ENCODE measurements at regions of chr6 and their contacts with region 1.

Region 1: DNA sequence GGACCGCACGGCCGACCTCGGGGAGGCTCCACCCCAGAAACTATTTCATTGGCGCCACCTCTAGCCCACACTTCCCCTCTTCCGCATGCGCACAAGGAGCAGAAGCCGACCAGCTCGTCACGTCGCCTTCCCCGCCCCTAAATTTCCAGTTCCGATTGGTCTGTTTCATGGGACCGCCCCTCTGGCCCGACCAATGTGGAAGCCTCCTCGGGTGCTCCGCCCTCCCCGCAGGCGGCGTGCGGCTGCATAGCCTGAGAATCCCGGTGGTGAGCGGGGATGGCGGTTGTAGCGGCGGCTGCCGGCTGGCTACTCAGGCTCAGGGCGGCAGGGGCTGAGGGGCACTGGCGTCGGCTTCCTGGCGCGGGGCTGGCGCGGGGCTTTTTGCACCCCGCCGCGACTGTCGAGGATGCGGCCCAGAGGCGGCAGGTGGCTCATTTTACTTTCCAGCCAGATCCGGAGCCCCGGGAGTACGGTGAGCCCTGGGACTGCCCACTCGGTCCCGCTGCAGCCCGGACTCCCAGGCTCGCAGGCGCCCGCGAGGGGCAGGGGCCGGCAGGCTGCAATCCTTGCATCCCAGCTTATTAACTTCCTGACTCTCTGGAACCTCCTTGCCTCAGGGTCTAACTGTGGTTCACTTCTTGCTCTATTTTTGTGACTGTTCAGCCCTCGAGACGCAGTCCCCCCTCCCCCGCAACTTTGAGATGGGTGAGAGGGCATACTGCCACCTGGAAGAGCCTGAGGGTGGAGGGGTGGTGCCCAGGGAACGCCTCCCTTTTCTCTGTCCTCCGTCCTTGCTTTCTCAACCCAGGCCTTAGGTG is at the start of gene BCKDHB:
- DNase-seq: peak; percentile 91 to 99 (median 98)
- ATAC-seq: peak; percentile 99
- H3K4me3 ChIP-seq: peak within 1 kb of the TSS; percentile 77
- H3K4me3 Mint-ChIP-seq: peak within 1 kb of the TSS; percentile 86 to 98 (median 94)
- H3K27ac ChIP-seq: peak within 1 kb of the TSS; percentile 75
- H3K27ac Mint-ChIP-seq: peak within 1 kb of the TSS; percentile 78 to 94 (median 91)
- H3K4me1 ChIP-seq: peaks cover 0 to 6% of the 10 kb centered on the region in 2 donors
- H3K4me1 Mint-ChIP-seq: peaks cover 17 to 34% (median 24%) of the 10 kb centered on the region in 7 donors
- H3K27me3 ChIP-seq: no peaks in the 10 kb centered on the region
- H3K27me3 Mint-ChIP-seq: peaks cover 5 to 16% (median 11%) of the 10 kb centered on the region in 5 donors
- total RNA-seq, gene BCKDHB: 13.8 to 22.1 (median 17.4) TPM

Region 2: GRCh38 chr6:79078075-79079025 is 1028.3 kb before region 1 on chr6 and contains the start of gene PHIP:
- CTCF ChIA-PET with region 1: no interaction called
- POLR2A ChIA-PET with region 1: interaction called, 10 read pairs
- intact Hi-C with region 1: loop called (anchors 1 to 5 kb)
- DNase-seq: peak; percentile 89 to 97 (median 94)
- ATAC-seq: peak; percentile 90
- H3K4me3 ChIP-seq: peak within 1 kb of the TSS; percentile 83
- H3K4me3 Mint-ChIP-seq: peak within 1 kb of the TSS; percentile 92 to 98 (median 94)
- H3K27ac ChIP-seq: peak within 1 kb of the TSS; percentile 98
- H3K27ac Mint-ChIP-seq: peak within 1 kb of the TSS; percentile 93 to 98 (median 95)
- H3K4me1 ChIP-seq: peaks cover 19 to 21% of the 10 kb centered on the region in 2 donors
- H3K4me1 Mint-ChIP-seq: peaks cover 19 to 46% (median 41%) of the 10 kb centered on the region in 7 donors
- H3K27me3 ChIP-seq: no peaks in the 10 kb centered on the region
- H3K27me3 Mint-ChIP-seq: peaks cover 4 to 23% (median 15%) of the 10 kb centered on the region in 5 donors
- total RNA-seq, gene PHIP: 34.0 to 46.8 (median 41.6) TPM

Region 3: DNA sequence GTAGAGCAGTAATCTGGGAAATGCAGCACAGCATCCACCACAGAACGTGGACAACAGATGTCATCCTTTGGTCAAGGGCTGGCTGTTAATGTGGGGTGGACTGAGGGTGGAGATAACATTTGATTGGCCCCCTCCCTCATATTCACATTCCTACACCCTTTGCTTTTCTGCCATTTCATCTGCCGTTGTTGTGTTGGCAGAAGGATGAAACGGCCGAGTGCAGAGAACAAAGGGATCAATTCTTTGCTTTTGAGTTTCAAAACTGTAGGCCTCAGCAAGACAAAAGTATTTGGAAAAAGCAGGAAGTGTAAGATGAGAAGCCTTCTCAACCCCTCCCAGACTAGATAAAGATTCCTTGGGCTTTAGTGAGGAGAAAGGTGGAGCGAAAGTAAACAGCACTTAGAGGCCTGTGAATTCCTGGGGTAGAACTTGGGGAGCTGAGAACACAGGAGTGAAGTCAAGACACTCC is 954.3 kb before region 1 on chr6:
- CTCF ChIA-PET with region 1: no interaction called
- POLR2A ChIA-PET with region 1: no interaction called
- intact Hi-C with region 1: no loop called
- DNase-seq: no peak
- ATAC-seq: no peak
- H3K4me3 ChIP-seq: no peak overlapping the region
- H3K4me3 Mint-ChIP-seq: no peak overlapping the region
- H3K27ac ChIP-seq: no peak overlapping the region
- H3K27ac Mint-ChIP-seq: no peak overlapping the region
- H3K4me1 ChIP-seq: no peaks in the 10 kb centered on the region
- H3K4me1 Mint-ChIP-seq: no peaks in the 10 kb centered on the region
- H3K27me3 ChIP-seq: no peaks in the 10 kb centered on the region
- H3K27me3 Mint-ChIP-seq: peaks cover 0 to 8% (median 2%) of the 10 kb centered on the region in 5 donors

Region 4: DNA sequence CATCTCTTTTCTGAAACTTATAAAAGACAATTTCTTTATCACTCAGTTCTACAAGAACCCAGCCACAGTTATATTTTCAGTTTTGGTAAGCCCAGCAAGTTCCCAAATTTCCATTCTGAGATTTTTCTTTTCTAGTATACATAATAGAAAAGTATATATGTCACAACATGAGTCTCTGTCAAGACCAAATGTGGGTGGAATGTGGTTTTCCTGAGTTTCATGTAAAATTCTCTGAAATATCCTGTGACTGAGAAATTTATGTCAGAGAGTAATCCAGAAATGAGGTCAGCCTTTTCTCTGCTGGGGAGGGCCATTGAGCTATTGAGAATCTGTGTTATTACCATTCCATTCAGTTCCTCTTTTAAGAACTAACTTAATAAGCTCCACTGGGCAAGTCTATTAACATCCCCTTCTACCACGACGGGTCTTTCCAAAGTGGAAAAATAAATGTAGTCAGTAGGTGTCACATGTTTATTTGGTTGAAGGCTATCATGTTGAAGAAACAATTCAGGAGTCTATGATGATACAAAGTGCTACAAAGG is 771.4 kb before region 1 on chr6:
- CTCF ChIA-PET with region 1: no interaction called
- POLR2A ChIA-PET with region 1: no interaction called
- intact Hi-C with region 1: no loop called
- DNase-seq: no peak
- ATAC-seq: no peak
- H3K4me3 ChIP-seq: no peak overlapping the region
- H3K4me3 Mint-ChIP-seq: no peak overlapping the region
- H3K27ac ChIP-seq: no peak overlapping the region
- H3K27ac Mint-ChIP-seq: no peak overlapping the region
- H3K4me1 ChIP-seq: no peaks in the 10 kb centered on the region
- H3K4me1 Mint-ChIP-seq: no peaks in the 10 kb centered on the region
- H3K27me3 ChIP-seq: no peaks in the 10 kb centered on the region
- H3K27me3 Mint-ChIP-seq: peaks cover 0 to 34% (median 15%) of the 10 kb centered on the region in 5 donors

Region 5: DNA sequence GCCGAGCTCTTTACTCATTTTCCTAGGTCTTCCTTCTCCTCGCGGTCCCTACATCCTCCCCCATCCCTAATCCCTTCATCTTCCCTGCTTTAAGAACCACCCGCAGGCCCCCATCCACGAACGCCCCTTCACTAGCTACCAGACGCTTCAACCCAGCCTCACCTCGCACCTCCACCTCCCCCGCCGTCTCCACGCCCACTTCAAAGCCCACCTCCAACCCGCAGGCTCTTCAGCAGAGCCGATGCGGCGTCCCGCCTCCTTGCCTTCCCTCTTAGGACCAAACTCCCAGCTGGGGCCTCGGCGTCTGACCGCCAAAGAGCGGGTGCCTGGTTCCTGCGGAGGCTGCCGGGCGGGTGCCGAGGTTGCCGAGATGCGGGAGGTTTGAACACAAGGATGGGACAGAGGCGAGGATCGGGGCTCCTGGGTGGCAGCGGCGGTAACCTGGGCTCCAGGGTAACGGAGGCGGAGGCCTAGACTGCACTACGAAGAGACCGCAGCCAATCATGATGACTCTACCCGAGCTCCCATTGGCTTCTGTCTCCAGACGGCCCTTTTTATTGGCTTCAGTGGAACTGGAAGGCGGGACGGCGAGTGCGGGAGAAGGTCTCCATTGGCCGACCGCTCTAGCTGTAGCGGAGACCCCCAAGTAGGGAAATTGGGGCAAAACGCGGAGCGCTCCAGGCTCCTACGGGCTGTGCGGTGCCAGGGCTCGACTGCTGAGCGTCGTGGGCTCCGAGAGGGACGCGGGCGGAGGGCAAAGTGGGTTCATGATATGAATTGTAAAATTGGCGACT is 569.5 kb before region 1 on chr6 and contains the start of gene LCA5:
- CTCF ChIA-PET with region 1: no interaction called
- POLR2A ChIA-PET with region 1: no interaction called
- intact Hi-C with region 1: loop called (anchors 1 to 10 kb)
- DNase-seq: peak; percentile 65 to 93 (median 89)
- ATAC-seq: peak; percentile 99
- H3K4me3 ChIP-seq: peak within 1 kb of the TSS; percentile 72
- H3K4me3 Mint-ChIP-seq: no peak within 1 kb of the TSS
- H3K27ac ChIP-seq: peak within 1 kb of the TSS; percentile 50
- H3K27ac Mint-ChIP-seq: no peak within 1 kb of the TSS
- H3K4me1 ChIP-seq: peaks cover 4 to 6% of the 10 kb centered on the region in 2 donors
- H3K4me1 Mint-ChIP-seq: peaks cover 0 to 7% (median 0%) of the 10 kb centered on the region in 7 donors
- H3K27me3 ChIP-seq: peaks cover 0 to 4% of the 10 kb centered on the region in 2 donors
- H3K27me3 Mint-ChIP-seq: peaks cover 0 to 20% (median 6%) of the 10 kb centered on the region in 5 donors
- total RNA-seq, gene LCA5: 0.10 to 0.65 (median 0.24) TPM

Region 6: GRCh38 chr6:79604583-79605037 is 502.0 kb before region 1 on chr6:
- CTCF ChIA-PET with region 1: no interaction called
- POLR2A ChIA-PET with region 1: no interaction called
- intact Hi-C with region 1: no loop called
- DNase-seq: no peak
- ATAC-seq: no peak
- H3K4me3 ChIP-seq: no peak overlapping the region
- H3K4me3 Mint-ChIP-seq: no peak overlapping the region
- H3K27ac ChIP-seq: no peak overlapping the region
- H3K27ac Mint-ChIP-seq: no peak overlapping the region
- H3K4me1 ChIP-seq: no peaks in the 10 kb centered on the region
- H3K4me1 Mint-ChIP-seq: peaks cover 0 to 5% (median 0%) of the 10 kb centered on the region in 7 donors
- H3K27me3 ChIP-seq: no peaks in the 10 kb centered on the region
- H3K27me3 Mint-ChIP-seq: peaks cover 0 to 8% (median 0%) of the 10 kb centered on the region in 5 donors

Region 7: DNA sequence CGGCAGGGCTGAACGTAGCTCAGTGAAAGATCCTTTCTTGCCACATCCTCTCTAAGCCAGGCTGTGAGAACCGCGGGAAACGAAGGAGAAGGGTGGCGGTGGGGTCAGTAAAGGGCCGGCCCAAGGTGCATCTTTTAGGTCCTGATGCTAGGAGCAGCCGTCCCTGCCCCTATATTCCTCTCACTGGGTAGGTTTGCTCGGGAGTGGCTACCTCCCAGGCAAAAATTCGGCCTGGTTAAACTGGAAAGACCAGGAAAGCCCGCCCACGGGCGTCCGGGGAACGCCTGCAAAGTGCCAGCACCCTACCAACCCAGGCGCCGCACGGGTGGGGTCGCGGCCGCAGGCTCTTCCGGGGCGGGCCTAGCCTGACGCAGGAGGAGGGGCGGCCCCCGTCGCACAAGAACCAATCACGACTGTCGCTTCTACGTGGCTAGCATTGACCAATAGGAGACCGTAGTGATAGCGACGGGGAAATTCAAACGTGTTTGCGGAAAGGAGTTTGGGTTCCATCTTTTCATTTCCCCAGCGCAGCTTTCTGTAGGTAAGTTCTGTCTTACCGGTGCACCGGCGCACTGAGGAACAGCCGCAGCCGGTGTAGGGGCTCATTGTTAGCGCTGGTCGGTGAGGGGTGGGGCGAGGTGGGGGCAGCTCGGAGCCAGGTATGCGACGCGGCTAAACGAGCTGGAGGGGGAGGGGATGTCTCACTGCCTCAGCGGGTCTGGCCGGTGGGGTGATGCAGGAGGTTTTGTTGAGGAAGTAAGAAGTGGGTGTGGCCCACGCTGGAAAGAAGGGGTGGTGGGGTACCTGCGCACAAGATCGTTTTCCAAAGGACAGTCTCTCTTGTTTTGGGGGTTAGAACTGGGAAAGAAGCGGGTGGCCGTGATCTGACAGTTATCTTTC is 102.2 kb before region 1 on chr6 and contains the start of gene TTK:
- CTCF ChIA-PET with region 1: no interaction called
- POLR2A ChIA-PET with region 1: interaction called, 5 read pairs
- intact Hi-C with region 1: loop called (anchors 1 kb)
- DNase-seq: peak; percentile 84 to 94 (median 91)
- ATAC-seq: peak; percentile 100
- H3K4me3 ChIP-seq: peak within 1 kb of the TSS; percentile 94
- H3K4me3 Mint-ChIP-seq: peak within 1 kb of the TSS; percentile 80 to 97 (median 90)
- H3K27ac ChIP-seq: peak within 1 kb of the TSS; percentile 80
- H3K27ac Mint-ChIP-seq: peak within 1 kb of the TSS; percentile 65 to 97 (median 94)
- H3K4me1 ChIP-seq: peaks cover 9 to 10% of the 10 kb centered on the region in 2 donors
- H3K4me1 Mint-ChIP-seq: peaks cover 2 to 41% (median 19%) of the 10 kb centered on the region in 7 donors
- H3K27me3 ChIP-seq: no peaks in the 10 kb centered on the region
- H3K27me3 Mint-ChIP-seq: peaks cover 0 to 5% (median 0%) of the 10 kb centered on the region in 5 donors
- total RNA-seq, gene TTK: 0.13 to 22.4 (median 0.81) TPM

Region 8: DNA sequence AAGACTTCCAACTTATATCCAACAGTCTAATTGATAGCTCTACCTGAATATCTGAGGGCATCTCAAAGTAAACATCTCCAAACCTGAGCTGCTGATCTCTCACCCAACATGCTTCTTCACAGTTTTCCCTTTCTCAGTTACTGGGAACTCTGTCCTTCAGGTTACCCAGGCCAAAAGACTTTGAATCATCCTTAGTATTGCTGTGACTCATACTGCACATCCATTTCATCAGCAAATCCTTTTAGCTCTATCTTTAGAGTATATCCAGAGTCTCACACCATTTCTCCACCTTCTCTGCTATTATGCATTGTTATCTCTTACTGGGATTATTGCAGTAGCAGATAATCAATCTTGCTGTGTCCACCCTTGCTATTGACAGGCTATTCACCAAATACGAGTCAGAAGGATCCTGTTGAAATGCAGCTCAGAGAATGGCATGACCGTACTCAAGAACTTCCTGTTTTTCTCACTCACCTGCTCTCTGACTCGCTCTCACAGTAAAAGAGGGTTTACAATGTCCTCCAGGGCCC is 57.1 kb after region 1 on chr6:
- CTCF ChIA-PET with region 1: interaction called, 3 read pairs
- POLR2A ChIA-PET with region 1: interaction called, 4 read pairs
- intact Hi-C with region 1: loop called (anchors 1 to 2 kb)
- DNase-seq: peak in 6 of 9 donors; percentile 0 to 33 (median 24)
- ATAC-seq: peak; percentile 63
- H3K4me3 ChIP-seq: peak overlapping the region; percentile 2
- H3K4me3 Mint-ChIP-seq: no peak overlapping the region
- H3K27ac ChIP-seq: peak overlapping the region; percentile 14
- H3K27ac Mint-ChIP-seq: no peak overlapping the region
- H3K4me1 ChIP-seq: peaks cover 7 to 17% of the 10 kb centered on the region in 2 donors
- H3K4me1 Mint-ChIP-seq: peaks cover 0 to 4% (median 0%) of the 10 kb centered on the region in 7 donors
- H3K27me3 ChIP-seq: no peaks in the 10 kb centered on the region
- H3K27me3 Mint-ChIP-seq: no peaks in the 10 kb centered on the region